ENCODE measurements at regions of chr14 and their contacts with region 1.

Region 1: GRCh38 chr14:70809543-70810244 is 381 bp upstream of the MAP3K9 start:
- DNase-seq: peak; percentile 98
- CTCF ChIP-seq: no peak

Region 2: GRCh38 chr14:70448633-70449340 is 360.9 kb before region 1 on chr14:
- in situ Hi-C with region 1: no loop called
- DNase-seq: no peak
- CTCF ChIP-seq: no peak

Region 3: GRCh38 chr14:70714055-70714621 is 95.6 kb before region 1 on chr14:
- in situ Hi-C with region 1: loop called (anchors 10 kb)
- DNase-seq: no peak
- CTCF ChIP-seq: peak; percentile 47

Region 4: GRCh38 chr14:70726651-70727375 is 82.9 kb before region 1 on chr14:
- in situ Hi-C with region 1: no loop called
- DNase-seq: no peak
- CTCF ChIP-seq: no peak